CD14-positive monocyte (primary cell): ENCODE measurements at regions of chr3 and their contacts with region 1.

Region 1: GRCh38 chr3:129934234-129935123 is 40.0 kb upstream of the TRH start:
- DNase-seq: peak in 2 of 3 donors; percentile 41 to 44
- H3K4me3 ChIP-seq: peak overlapping the region in 1 of 3 experiments; percentile 35
- H3K4me3 Mint-ChIP-seq: peak overlapping the region; percentile 48 to 67
- H3K27ac ChIP-seq: no peak overlapping the region
- H3K27ac Mint-ChIP-seq: peak overlapping the region in 2 of 7 donors; percentile 7 to 55
- H3K4me1 ChIP-seq: peaks cover 8 to 11% of the 10 kb centered on the region in 2 donors
- H3K4me1 Mint-ChIP-seq: peaks cover 12% of the 10 kb centered on the region
- H3K27me3 ChIP-seq: no peaks in the 10 kb centered on the region
- H3K27me3 Mint-ChIP-seq: peaks cover 0 to 8% (median 4%) of the 10 kb centered on the region in 3 donors
- CTCF ChIP-seq: peak; percentile 96

Region 2: GRCh38 chr3:129490242-129491045 is 444.0 kb before region 1 on chr3:
- intact Hi-C with region 1: loop called (anchors 5 to 10 kb)
- DNase-seq: peak; percentile 94 to 98 (median 96)
- H3K4me3 ChIP-seq: no peak overlapping the region
- H3K4me3 Mint-ChIP-seq: peak overlapping the region in 1 of 2 donors; percentile 26
- H3K27ac ChIP-seq: peak overlapping the region; percentile 89
- H3K27ac Mint-ChIP-seq: peak overlapping the region; percentile 87 to 98 (median 94)
- H3K4me1 ChIP-seq: peaks cover 50 to 55% of the 10 kb centered on the region in 2 donors
- H3K4me1 Mint-ChIP-seq: peaks cover 53% of the 10 kb centered on the region
- H3K27me3 ChIP-seq: no peaks in the 10 kb centered on the region
- H3K27me3 Mint-ChIP-seq: peaks cover 0 to 1% (median 0%) of the 10 kb centered on the region in 3 donors
- CTCF ChIP-seq: peak; percentile 91

Region 3: GRCh38 chr3:129650256-129650872 is 284.1 kb before region 1 on chr3:
- intact Hi-C with region 1: loop called in 1 of 2 experiments (anchors 5 kb)
- DNase-seq: peak; percentile 34 to 57 (median 47)
- H3K4me3 ChIP-seq: no peak overlapping the region
- H3K4me3 Mint-ChIP-seq: no peak overlapping the region
- H3K27ac ChIP-seq: no peak overlapping the region
- H3K27ac Mint-ChIP-seq: peak overlapping the region in 2 of 7 donors; percentile 33 to 73
- H3K4me1 ChIP-seq: peaks cover 4 to 5% of the 10 kb centered on the region in 2 donors
- H3K4me1 Mint-ChIP-seq: peaks cover 7% of the 10 kb centered on the region
- H3K27me3 ChIP-seq: no peaks in the 10 kb centered on the region
- H3K27me3 Mint-ChIP-seq: peaks cover 0 to 3% (median under 1%) of the 10 kb centered on the region in 3 donors
- CTCF ChIP-seq: peak; percentile 72

Region 4: GRCh38 chr3:129794311-129795185 is 139.9 kb before region 1 on chr3:
- intact Hi-C with region 1: no loop called
- DNase-seq: peak in 2 of 3 donors; percentile 5 to 6
- H3K4me3 ChIP-seq: peak overlapping the region in 1 of 3 experiments; percentile 52
- H3K4me3 Mint-ChIP-seq: peak overlapping the region; percentile 47 to 84
- H3K27ac ChIP-seq: peak overlapping the region in 1 of 2 donors; percentile 49
- H3K27ac Mint-ChIP-seq: peak overlapping the region; percentile 50 to 88 (median 70)
- H3K4me1 ChIP-seq: peaks cover 25% of the 10 kb centered on the region in 2 donors
- H3K4me1 Mint-ChIP-seq: peaks cover 28% of the 10 kb centered on the region
- H3K27me3 ChIP-seq: no peaks in the 10 kb centered on the region
- H3K27me3 Mint-ChIP-seq: no peaks in the 10 kb centered on the region
- CTCF ChIP-seq: no peak

Region 5: GRCh38 chr3:129824926-129825541 is 109.4 kb before region 1 on chr3:
- intact Hi-C with region 1: loop called (anchors 10 kb)
- DNase-seq: peak; percentile 33 to 68 (median 55)
- H3K4me3 ChIP-seq: no peak overlapping the region
- H3K4me3 Mint-ChIP-seq: no peak overlapping the region
- H3K27ac ChIP-seq: no peak overlapping the region
- H3K27ac Mint-ChIP-seq: peak overlapping the region in 5 of 7 donors; percentile 13 to 73 (median 16)
- H3K4me1 ChIP-seq: peaks cover 48 to 54% of the 10 kb centered on the region in 2 donors
- H3K4me1 Mint-ChIP-seq: peaks cover 51% of the 10 kb centered on the region
- H3K27me3 ChIP-seq: no peaks in the 10 kb centered on the region
- H3K27me3 Mint-ChIP-seq: peaks cover 0 to 2% (median 0%) of the 10 kb centered on the region in 3 donors
- CTCF ChIP-seq: peak; percentile 89

Region 6: GRCh38 chr3:129893581-129894070 is 40.9 kb before region 1 on chr3 and contains the start of gene TMCC1:
- intact Hi-C with region 1: loop called in 1 of 2 experiments (anchors 5 kb)
- DNase-seq: peak; percentile 73 to 84 (median 76)
- H3K4me3 ChIP-seq: peak within 1 kb of the TSS; percentile 75 to 94 (median 80)
- H3K4me3 Mint-ChIP-seq: peak within 1 kb of the TSS; percentile 91 to 93
- H3K27ac ChIP-seq: peak within 1 kb of the TSS; percentile 75 to 93
- H3K27ac Mint-ChIP-seq: peak within 1 kb of the TSS; percentile 83 to 95 (median 92)
- H3K4me1 ChIP-seq: peaks cover 39 to 43% of the 10 kb centered on the region in 2 donors
- H3K4me1 Mint-ChIP-seq: peaks cover 40% of the 10 kb centered on the region
- H3K27me3 ChIP-seq: no peaks in the 10 kb centered on the region
- H3K27me3 Mint-ChIP-seq: no peaks in the 10 kb centered on the region
- CTCF ChIP-seq: no peak
- polyA plus RNA-seq, gene TMCC1: 5.0 to 10.2 (median 5.0) TPM

Region 7: DNA sequence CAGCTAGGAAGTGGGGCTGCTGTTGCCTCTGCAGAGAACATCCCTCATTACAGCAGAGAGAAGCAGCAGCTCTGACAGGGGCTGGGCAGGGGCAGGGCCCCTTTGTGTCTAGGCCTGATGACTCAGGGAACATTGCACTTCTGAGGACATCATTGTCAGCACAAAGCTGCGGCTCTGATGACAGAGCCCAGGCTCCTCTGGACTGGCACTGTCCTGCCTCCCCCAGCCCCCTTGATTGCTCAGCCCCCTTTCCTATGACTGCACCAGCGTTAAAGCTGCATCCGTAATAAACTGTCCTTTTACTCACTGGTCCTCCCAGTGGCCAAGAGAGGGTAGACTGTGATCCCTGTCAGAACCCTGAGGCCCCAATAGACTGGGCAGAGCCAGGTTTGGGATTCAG is 58.3 kb after region 1 on chr3:
- intact Hi-C with region 1: no loop called
- DNase-seq: no peak
- H3K4me3 ChIP-seq: no peak overlapping the region
- H3K4me3 Mint-ChIP-seq: no peak overlapping the region
- H3K27ac ChIP-seq: no peak overlapping the region
- H3K27ac Mint-ChIP-seq: no peak overlapping the region
- H3K4me1 ChIP-seq: no peaks in the 10 kb centered on the region
- H3K4me1 Mint-ChIP-seq: no peaks in the 10 kb centered on the region
- H3K27me3 ChIP-seq: no peaks in the 10 kb centered on the region
- H3K27me3 Mint-ChIP-seq: peaks cover 0 to 7% (median 0%) of the 10 kb centered on the region in 3 donors
- CTCF ChIP-seq: no peak